T-cell (primary cell): ENCODE measurements at regions of chr16 and their contacts with region 1.

Region 1: GRCh38 chr16:69726296-69727060 is at the start of gene NQO1:
- DNase-seq: peak; percentile 61 to 89 (median 75)
- ATAC-seq: peak; percentile 97 to 99 (median 98)
- H3K4me3 ChIP-seq: peak within 1 kb of the TSS; percentile 59 to 71
- H3K4me3 Mint-ChIP-seq: peak within 1 kb of the TSS; percentile 92 to 97 (median 95)
- H3K27ac ChIP-seq: peak within 1 kb of the TSS; percentile 53
- H3K27ac Mint-ChIP-seq: peak within 1 kb of the TSS; percentile 95 to 97
- H3K4me1 ChIP-seq: peaks cover 5 to 24% of the 10 kb centered on the region in 2 experiments
- H3K4me1 Mint-ChIP-seq: peaks cover 25 to 28% (median 27%) of the 10 kb centered on the region in 3 donors
- H3K27me3 ChIP-seq: no peaks in the 10 kb centered on the region
- H3K27me3 Mint-ChIP-seq: no peaks in the 10 kb centered on the region
- total RNA-seq, gene NQO1: 1.4 to 6.1 (median 4.1) TPM

Region 2: GRCh38 chr16:69595127-69596036 is 131.1 kb before region 1 on chr16:
- CTCF ChIA-PET with region 1: no interaction called
- POLR2A ChIA-PET with region 1: no interaction called
- DNase-seq: no peak
- ATAC-seq: no peak
- H3K4me3 ChIP-seq: no peak overlapping the region
- H3K4me3 Mint-ChIP-seq: no peak overlapping the region
- H3K27ac ChIP-seq: no peak overlapping the region
- H3K27ac Mint-ChIP-seq: no peak overlapping the region
- H3K4me1 ChIP-seq: peaks cover 0 to 2% of the 10 kb centered on the region in 2 experiments
- H3K4me1 Mint-ChIP-seq: peaks cover 24 to 53% (median 50%) of the 10 kb centered on the region in 3 donors
- H3K27me3 ChIP-seq: no peaks in the 10 kb centered on the region
- H3K27me3 Mint-ChIP-seq: no peaks in the 10 kb centered on the region

Region 3: DNA sequence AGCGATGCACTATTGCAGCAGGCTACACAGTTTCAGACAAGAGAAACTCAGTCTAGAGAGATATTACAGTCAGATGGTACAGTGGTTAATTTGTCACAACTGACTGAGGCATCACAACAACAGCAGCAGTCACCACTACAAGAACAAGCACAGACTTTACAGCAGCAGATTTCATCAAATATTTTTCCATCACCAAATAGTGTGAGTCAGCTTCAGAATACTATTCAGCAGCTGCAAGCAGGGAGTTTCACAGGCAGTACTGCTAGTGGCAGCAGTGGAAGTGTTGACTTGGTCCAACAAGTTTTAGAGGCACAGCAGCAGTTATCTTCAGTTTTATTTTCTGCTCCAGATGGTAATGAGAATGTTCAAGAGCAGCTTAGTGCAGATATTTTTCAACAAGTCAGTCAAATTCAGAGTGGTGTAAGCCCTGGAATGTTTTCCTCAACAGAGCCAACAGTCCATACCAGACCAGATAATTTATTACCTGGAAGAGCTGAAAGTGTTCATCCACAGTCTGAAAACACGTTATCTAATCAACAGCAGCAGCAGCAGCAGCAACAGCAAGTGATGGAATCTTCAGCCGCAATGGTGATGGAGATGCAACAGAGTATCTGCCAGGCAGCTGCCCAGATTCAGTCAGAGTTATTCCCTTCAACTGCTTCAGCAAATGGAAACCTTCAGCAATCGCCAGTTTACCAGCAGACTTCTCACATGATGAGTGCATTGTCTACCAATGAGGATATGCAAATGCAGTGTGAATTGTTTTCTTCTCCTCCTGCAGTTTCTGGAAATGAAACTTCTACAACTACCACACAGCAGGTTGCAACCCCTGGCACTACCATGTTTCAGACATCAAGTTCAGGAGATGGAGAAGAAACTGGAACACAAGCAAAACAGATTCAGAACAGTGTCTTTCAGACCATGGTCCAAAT is 34.2 kb before region 1 on chr16:
- CTCF ChIA-PET with region 1: no interaction called
- POLR2A ChIA-PET with region 1: no interaction called
- DNase-seq: no peak
- ATAC-seq: no peak
- H3K4me3 ChIP-seq: no peak overlapping the region
- H3K4me3 Mint-ChIP-seq: no peak overlapping the region
- H3K27ac ChIP-seq: no peak overlapping the region
- H3K27ac Mint-ChIP-seq: peak overlapping the region in 1 of 2 donors; percentile 2
- H3K4me1 ChIP-seq: no peaks in the 10 kb centered on the region
- H3K4me1 Mint-ChIP-seq: no peaks in the 10 kb centered on the region
- H3K27me3 ChIP-seq: no peaks in the 10 kb centered on the region
- H3K27me3 Mint-ChIP-seq: no peaks in the 10 kb centered on the region

Region 4: DNA sequence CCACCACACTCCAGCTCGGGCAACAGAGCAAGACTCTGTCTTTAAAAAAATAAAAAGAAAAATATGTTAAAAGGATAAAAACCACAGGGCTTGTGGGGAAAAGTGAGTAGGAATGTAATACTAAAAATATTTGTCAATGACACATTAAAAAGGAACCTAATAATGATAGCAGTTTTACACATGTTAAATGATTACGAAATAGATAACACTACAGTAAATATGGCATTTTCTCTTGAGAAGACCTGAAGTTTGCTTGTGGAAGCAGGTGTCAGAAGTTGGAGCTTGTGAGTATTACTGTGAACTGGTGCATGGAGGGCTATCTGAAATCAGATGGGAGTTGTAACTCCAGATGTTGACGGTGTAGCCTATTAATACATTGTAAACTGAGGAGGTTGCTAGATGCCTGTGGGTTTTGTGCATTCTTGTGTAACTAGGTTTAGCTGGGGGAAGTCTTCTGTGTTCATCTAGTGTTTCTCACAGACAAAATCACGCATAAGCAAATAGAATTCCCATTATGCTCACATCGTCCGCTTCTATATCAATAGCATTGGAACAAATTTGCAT is 180.4 kb after region 1 on chr16:
- CTCF ChIA-PET with region 1: no interaction called
- POLR2A ChIA-PET with region 1: interaction called in 1 of 2 experiments, 12 read pairs
- DNase-seq: no peak
- ATAC-seq: no peak
- H3K4me3 ChIP-seq: no peak overlapping the region
- H3K4me3 Mint-ChIP-seq: no peak overlapping the region
- H3K27ac ChIP-seq: no peak overlapping the region
- H3K27ac Mint-ChIP-seq: no peak overlapping the region
- H3K4me1 ChIP-seq: no peaks in the 10 kb centered on the region
- H3K4me1 Mint-ChIP-seq: no peaks in the 10 kb centered on the region
- H3K27me3 ChIP-seq: no peaks in the 10 kb centered on the region
- H3K27me3 Mint-ChIP-seq: no peaks in the 10 kb centered on the region